ENCODE measurements at regions of chr11 and their contacts with region 1.

Region 1: GRCh38 chr11:18540207-18541009 is 13.7 kb upstream of the TSG101 start:
- DNase-seq: no peak
- ATAC-seq: peak; percentile 84
- H3K4me3 ChIP-seq: no peak overlapping the region
- H3K27ac ChIP-seq: no peak overlapping the region
- H3K4me1 ChIP-seq: no peaks in the 10 kb centered on the region
- H3K27me3 ChIP-seq: no peaks in the 10 kb centered on the region
- CTCF ChIP-seq: peak; percentile 46 to 69 (median 56)
- EP300 ChIP-seq: no peak
- POLR2A ChIP-seq: no peak
- RAD21 ChIP-seq: peak; percentile 66

Region 2: GRCh38 chr11:18173225-18173866 is 367.1 kb before region 1 on chr11:
- CTCF ChIA-PET with region 1: no interaction called
- POLR2A ChIA-PET with region 1: no interaction called
- RAD21 ChIA-PET with region 1: no interaction called
- SMC1A ChIA-PET with region 1: no interaction called
- in situ Hi-C with region 1: no loop called
- intact Hi-C with region 1: no loop called
- DNase-seq: no peak
- ATAC-seq: no peak
- H3K4me3 ChIP-seq: no peak overlapping the region
- H3K27ac ChIP-seq: no peak overlapping the region
- H3K4me1 ChIP-seq: no peaks in the 10 kb centered on the region
- H3K27me3 ChIP-seq: no peaks in the 10 kb centered on the region; a peak in 1 of 4 replicates
- CTCF ChIP-seq: no peak
- EP300 ChIP-seq: no peak
- POLR2A ChIP-seq: no peak
- RAD21 ChIP-seq: no peak

Region 3: DNA sequence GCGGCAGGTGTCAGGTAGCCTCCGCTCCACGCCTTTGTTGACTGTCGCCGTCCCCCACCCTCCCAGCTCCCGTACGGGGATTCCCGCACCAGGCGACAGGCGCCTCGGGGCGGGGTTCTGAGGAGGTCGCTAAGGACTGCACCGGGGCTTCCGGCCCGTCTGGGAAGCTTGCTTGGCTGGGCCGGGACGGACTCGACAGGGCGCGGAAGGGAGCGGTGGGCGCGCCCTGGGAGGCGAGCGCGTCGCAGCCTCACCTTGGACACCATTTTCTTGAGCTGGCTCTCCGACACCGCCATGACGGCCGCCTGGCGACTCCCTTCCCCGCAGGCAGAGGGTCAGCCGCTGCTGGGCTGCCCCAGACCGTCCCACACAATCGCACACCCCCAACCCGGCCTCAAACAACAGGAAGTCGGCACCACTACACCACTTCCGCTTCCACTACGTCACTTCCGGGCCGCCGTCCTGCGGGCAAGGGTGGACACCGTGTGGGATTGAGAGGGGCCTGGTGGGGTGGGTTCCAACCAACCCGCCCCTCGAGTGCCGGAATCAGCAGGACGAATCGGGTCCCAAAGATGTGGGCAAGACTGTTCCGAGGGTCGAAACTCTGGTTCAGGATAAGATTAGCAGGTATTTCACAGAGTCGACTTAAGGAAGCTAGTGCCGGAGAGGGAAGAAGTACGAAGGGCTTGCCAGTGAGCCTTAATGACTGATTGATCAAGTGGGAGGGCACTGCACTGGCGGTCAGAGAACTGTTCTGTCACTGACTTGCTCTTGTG is 13.7 kb before region 1 on chr11 and contains the start of gene TSG101:
- CTCF ChIA-PET with region 1: interaction called, 30 read pairs
- POLR2A ChIA-PET with region 1: interaction called, 4 read pairs
- RAD21 ChIA-PET with region 1: interaction called, 3 read pairs
- SMC1A ChIA-PET with region 1: interaction called, 6 read pairs
- in situ Hi-C with region 1: no loop called
- intact Hi-C with region 1: no loop called
- DNase-seq: peak; percentile 69
- ATAC-seq: peak; percentile 91
- H3K4me3 ChIP-seq: peak within 1 kb of the TSS; percentile 95
- H3K27ac ChIP-seq: peak within 1 kb of the TSS; percentile 91
- H3K4me1 ChIP-seq: no peaks in the 10 kb centered on the region; the same call in 1 of the 2 replicates
- H3K27me3 ChIP-seq: no peaks in the 10 kb centered on the region
- CTCF ChIP-seq: no peak
- EP300 ChIP-seq: peak in 1 of 2 experiments; percentile 15; a peak in 1 of 4 replicates
- POLR2A ChIP-seq: peak; percentile 98
- RAD21 ChIP-seq: no peak
- polyA plus RNA-seq, gene TSG101: 22.3 to 37.6 TPM

Region 4: DNA sequence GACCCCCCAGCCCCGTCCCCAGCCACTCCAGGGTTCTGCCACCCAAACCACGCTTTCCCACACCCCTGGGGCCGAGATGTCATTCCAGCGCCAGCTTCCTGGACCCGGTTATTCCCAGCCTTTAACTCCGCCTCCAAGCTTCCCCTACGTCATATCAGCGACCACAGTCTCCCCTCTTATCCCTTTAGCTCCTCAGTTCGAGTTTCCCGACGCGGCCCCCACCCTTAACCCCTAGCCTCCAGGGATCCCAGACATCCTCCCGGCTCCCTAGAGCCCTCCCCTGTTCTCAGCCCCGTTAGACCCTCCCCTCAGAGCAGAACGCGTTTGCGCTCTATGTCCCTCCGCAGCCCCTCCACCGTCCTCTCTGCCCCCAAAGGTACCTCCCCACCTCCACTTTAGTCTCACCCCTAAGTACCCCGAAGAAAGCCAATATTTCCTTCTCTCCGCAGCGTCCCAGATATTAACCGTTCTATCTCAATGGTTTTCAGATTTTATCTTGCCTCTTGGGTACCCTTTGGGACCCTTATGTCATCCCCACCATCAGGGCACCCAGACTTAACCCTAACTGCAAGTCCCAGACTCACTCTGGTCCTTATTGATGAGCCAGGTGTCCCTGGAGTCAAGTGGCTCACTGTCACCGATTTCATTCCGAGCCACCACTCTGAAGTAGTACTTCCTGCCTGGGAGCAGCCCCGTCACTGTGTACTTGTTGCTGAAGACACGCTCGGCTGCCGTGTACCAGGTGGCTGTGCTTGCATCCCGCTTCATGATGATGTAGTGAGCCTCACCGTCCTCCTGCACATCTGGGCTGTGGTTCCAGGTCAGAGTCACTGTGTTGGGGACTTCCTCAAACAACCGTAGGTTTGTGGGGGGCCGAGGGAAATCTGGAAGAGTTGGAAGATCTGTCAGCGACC is 166.2 kb after region 1 on chr11:
- CTCF ChIA-PET with region 1: interaction called, 10 read pairs
- POLR2A ChIA-PET with region 1: no interaction called
- RAD21 ChIA-PET with region 1: no interaction called
- SMC1A ChIA-PET with region 1: interaction called, 3 read pairs
- in situ Hi-C with region 1: no loop called
- intact Hi-C with region 1: no loop called
- DNase-seq: no peak
- ATAC-seq: peak; percentile 55
- H3K4me3 ChIP-seq: no peak overlapping the region
- H3K27ac ChIP-seq: no peak overlapping the region
- H3K4me1 ChIP-seq: 0 out of 2 replicates have a peak, but pooled peaks cover 3% of the 10 kb centered on the region
- H3K27me3 ChIP-seq: peaks cover 6 to 10% of the 10 kb centered on the region in 2 experiments
- CTCF ChIP-seq: no peak
- EP300 ChIP-seq: no peak
- POLR2A ChIP-seq: no peak
- RAD21 ChIP-seq: no peak

Region 5: GRCh38 chr11:18757811-18758210 is 217.4 kb after region 1 on chr11:
- CTCF ChIA-PET with region 1: interaction called, 57 read pairs
- POLR2A ChIA-PET with region 1: no interaction called
- RAD21 ChIA-PET with region 1: interaction called, 44 read pairs
- SMC1A ChIA-PET with region 1: interaction called, 6 read pairs
- in situ Hi-C with region 1: no loop called
- intact Hi-C with region 1: no loop called
- DNase-seq: no peak
- ATAC-seq: no peak
- H3K4me3 ChIP-seq: no peak overlapping the region
- H3K27ac ChIP-seq: no peak overlapping the region
- H3K4me1 ChIP-seq: no peaks in the 10 kb centered on the region
- H3K27me3 ChIP-seq: no peaks in the 10 kb centered on the region; a peak in 2 of 4 replicates
- CTCF ChIP-seq: no peak
- EP300 ChIP-seq: no peak
- POLR2A ChIP-seq: no peak
- RAD21 ChIP-seq: no peak

Region 6: GRCh38 chr11:18802381-18803257 is 262.2 kb after region 1 on chr11:
- CTCF ChIA-PET with region 1: interaction called, 9 read pairs
- POLR2A ChIA-PET with region 1: no interaction called
- RAD21 ChIA-PET with region 1: interaction called, 4 read pairs
- SMC1A ChIA-PET with region 1: interaction called, 14 read pairs
- in situ Hi-C with region 1: no loop called
- intact Hi-C with region 1: no loop called
- DNase-seq: peak; percentile 12
- ATAC-seq: peak; percentile 80
- H3K4me3 ChIP-seq: no peak overlapping the region
- H3K27ac ChIP-seq: no peak overlapping the region
- H3K4me1 ChIP-seq: no peaks in the 10 kb centered on the region
- H3K27me3 ChIP-seq: peaks cover 0 to 9% of the 10 kb centered on the region in 2 experiments; a peak in 2 of 4 replicates
- CTCF ChIP-seq: peak; percentile 53 to 73 (median 71); a peak in 5 of 6 replicates
- EP300 ChIP-seq: no peak
- POLR2A ChIP-seq: no peak
- RAD21 ChIP-seq: peak; percentile 65

Measured in GM12878 (cell line).